GM12878 (cell line): ENCODE measurements at regions of chr10 and their contacts with region 1.

Region 1: DNA sequence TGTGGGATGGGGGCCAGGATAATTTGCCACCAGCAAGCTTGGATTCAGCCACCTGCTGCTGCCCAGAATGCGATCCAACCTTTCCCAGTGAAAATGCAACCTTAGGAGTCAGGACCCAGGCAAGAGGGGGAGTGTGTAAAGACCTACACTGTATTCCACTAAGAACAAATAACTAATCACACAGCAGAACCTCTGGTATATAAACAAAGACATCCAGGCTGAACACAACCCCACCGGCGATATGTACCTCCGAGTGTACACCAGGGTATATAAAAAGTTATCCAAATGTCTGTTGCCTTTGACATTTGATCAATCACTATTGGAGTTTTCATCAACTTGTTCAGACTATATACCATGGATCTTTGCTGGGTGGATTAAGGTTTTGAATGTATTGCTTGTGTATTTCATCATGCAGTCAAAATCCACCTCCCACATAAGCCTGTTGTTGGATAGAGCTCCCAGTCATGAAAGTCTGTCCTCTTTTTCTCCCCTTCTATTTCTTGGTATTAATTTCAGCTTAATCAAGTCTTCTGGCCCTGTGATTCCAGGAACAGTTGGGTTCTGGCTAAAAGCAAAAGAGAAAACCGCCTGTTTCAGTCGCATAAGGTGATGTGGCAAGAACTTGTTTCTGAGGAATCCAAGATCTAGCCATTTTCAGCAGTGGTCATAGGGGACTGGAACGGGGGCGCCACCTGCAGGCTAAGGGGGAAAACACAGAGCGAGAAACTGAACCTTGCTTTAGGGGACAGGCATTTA is 290.7 kb downstream of the CCDC3 start:
- DNase-seq: peak; percentile 26
- ATAC-seq: peak; percentile 98
- H3K4me3 ChIP-seq: no peak overlapping the region
- H3K27ac ChIP-seq: peak overlapping the region; percentile 43; the same call in 1 of the 2 replicates
- H3K4me1 ChIP-seq: peaks cover 2% of the 10 kb centered on the region; the same call in 1 of the 2 replicates
- H3K27me3 ChIP-seq: no peaks in the 10 kb centered on the region
- CTCF ChIP-seq: peak; percentile 93 to 97 (median 94)
- EP300 ChIP-seq: no peak
- POLR2A ChIP-seq: no peak
- RAD21 ChIP-seq: peak; percentile 97

Region 2: DNA sequence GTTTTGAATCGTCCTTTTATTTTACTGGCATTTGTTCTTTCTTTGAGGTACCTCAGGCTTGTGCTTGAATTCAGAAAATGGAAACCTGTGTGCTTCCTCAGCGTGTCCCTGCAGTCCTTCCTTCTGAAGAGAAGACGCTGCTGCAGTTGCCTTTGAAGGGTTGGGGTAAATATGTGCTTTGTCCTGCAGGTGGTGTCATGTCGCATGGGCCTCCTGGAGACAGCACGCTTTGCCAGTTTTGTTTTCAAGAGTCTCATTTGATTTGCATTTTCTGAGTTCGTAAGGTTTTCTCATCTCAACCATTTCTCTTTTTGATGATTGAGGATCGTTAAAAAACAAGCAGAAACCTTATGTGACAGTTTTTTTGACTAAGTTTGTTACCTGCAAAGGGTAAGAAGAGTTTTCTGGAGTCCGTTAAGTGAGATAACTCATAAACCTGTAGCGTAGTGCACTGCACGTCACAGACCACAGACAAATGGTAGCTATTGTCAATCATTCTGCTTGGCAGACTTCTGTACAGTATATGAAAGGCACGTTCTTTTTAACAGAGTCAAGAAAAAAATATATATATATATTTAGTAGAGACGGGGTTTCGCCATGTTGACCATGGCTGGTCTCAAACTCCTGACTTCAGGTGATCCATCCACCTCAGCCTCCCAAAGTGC is 457.8 kb before region 1 on chr10:
- CTCF ChIA-PET with region 1: interaction called, 3 read pairs
- POLR2A ChIA-PET with region 1: no interaction called
- RAD21 ChIA-PET with region 1: interaction called, 9 read pairs
- SMC1A ChIA-PET with region 1: no interaction called
- in situ Hi-C with region 1: loop called (anchors 5 kb)
- intact Hi-C with region 1: loop called (anchors 1 kb)
- DNase-seq: no peak
- ATAC-seq: peak; percentile 96
- H3K4me3 ChIP-seq: no peak overlapping the region
- H3K27ac ChIP-seq: no peak overlapping the region
- H3K4me1 ChIP-seq: no peaks in the 10 kb centered on the region
- H3K27me3 ChIP-seq: no peaks in the 10 kb centered on the region
- CTCF ChIP-seq: peak; percentile 64 to 70 (median 69)
- EP300 ChIP-seq: no peak
- POLR2A ChIP-seq: no peak
- RAD21 ChIP-seq: peak; percentile 86

Region 3: GRCh38 chr10:12348870-12349628 is 361.7 kb before region 1 on chr10 and contains the start of gene CAMK1D:
- CTCF ChIA-PET with region 1: interaction called, 3 read pairs
- POLR2A ChIA-PET with region 1: interaction called, 3 read pairs
- RAD21 ChIA-PET with region 1: interaction called, 4 read pairs
- SMC1A ChIA-PET with region 1: interaction called, 3 read pairs
- in situ Hi-C with region 1: no loop called
- intact Hi-C with region 1: loop called (anchors 10 kb)
- DNase-seq: no peak
- ATAC-seq: peak; percentile 57
- H3K4me3 ChIP-seq: peak within 1 kb of the TSS; percentile 92
- H3K27ac ChIP-seq: peak within 1 kb of the TSS; percentile 67
- H3K4me1 ChIP-seq: peaks cover 27% of the 10 kb centered on the region
- H3K27me3 ChIP-seq: no peaks in the 10 kb centered on the region
- CTCF ChIP-seq: peak; percentile 9 to 19 (median 15); a peak in 1 of 6 replicates
- EP300 ChIP-seq: no peak
- POLR2A ChIP-seq: peak; percentile 85
- RAD21 ChIP-seq: peak; percentile 11; the same call in 1 of the 2 replicates
- polyA plus RNA-seq, gene CAMK1D: 2.1 to 5.5 TPM

Region 4: GRCh38 chr10:12484941-12485805 is 225.6 kb before region 1 on chr10:
- CTCF ChIA-PET with region 1: interaction called, 13 read pairs
- POLR2A ChIA-PET with region 1: no interaction called
- RAD21 ChIA-PET with region 1: interaction called, 4 read pairs
- SMC1A ChIA-PET with region 1: no interaction called
- in situ Hi-C with region 1: no loop called
- intact Hi-C with region 1: no loop called
- DNase-seq: peak; percentile 76
- ATAC-seq: peak; percentile 85
- H3K4me3 ChIP-seq: no peak overlapping the region
- H3K27ac ChIP-seq: peak overlapping the region; percentile 76
- H3K4me1 ChIP-seq: peaks cover 20% of the 10 kb centered on the region
- H3K27me3 ChIP-seq: no peaks in the 10 kb centered on the region
- CTCF ChIP-seq: peak in 2 of 3 experiments; percentile 37 to 56; a peak in 3 of 6 replicates
- EP300 ChIP-seq: no peak
- POLR2A ChIP-seq: peak; percentile 37
- RAD21 ChIP-seq: peak; percentile 31; the same call in 1 of the 2 replicates

Region 5: DNA sequence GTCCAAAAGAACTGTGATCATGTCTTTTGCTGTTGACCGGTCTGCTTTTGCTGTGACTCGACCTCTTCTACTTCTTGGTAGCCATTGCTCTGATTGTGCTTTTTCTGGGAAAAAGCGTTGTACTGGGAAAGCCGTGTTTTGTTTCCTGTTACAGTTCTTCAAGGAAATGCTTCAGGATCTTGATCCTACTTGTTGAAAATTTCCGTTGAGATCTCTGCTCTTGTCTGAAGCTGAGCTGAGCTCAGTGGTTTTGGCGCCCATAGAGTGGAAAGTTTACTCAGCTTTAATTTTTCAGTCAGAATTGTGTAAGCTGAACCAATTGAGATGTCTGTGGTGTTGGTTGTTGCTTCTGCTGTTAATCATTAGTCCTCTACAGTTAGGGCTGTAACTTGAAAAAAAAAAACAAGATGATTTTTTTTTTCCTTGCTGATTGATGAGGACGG is 11.5 kb before region 1 on chr10:
- CTCF ChIA-PET with region 1: interaction called, 21 read pairs
- POLR2A ChIA-PET with region 1: no interaction called
- RAD21 ChIA-PET with region 1: interaction called, 3 read pairs
- SMC1A ChIA-PET with region 1: interaction called, 7 read pairs
- in situ Hi-C with region 1: no loop called
- intact Hi-C with region 1: no loop called
- DNase-seq: no peak
- ATAC-seq: no peak
- H3K4me3 ChIP-seq: no peak overlapping the region
- H3K27ac ChIP-seq: no peak overlapping the region
- H3K4me1 ChIP-seq: no peaks in the 10 kb centered on the region
- H3K27me3 ChIP-seq: no peaks in the 10 kb centered on the region
- CTCF ChIP-seq: no peak
- EP300 ChIP-seq: no peak
- POLR2A ChIP-seq: no peak
- RAD21 ChIP-seq: no peak

Region 6: GRCh38 chr10:12902135-12902572 is 191.4 kb after region 1 on chr10:
- CTCF ChIA-PET with region 1: interaction called, 8 read pairs
- POLR2A ChIA-PET with region 1: interaction called, 6 read pairs
- RAD21 ChIA-PET with region 1: no interaction called
- SMC1A ChIA-PET with region 1: no interaction called
- in situ Hi-C with region 1: no loop called
- intact Hi-C with region 1: loop called (anchors 5 kb)
- DNase-seq: peak; percentile 4
- ATAC-seq: peak; percentile 76
- H3K4me3 ChIP-seq: no peak overlapping the region
- H3K27ac ChIP-seq: no peak overlapping the region
- H3K4me1 ChIP-seq: no peaks in the 10 kb centered on the region
- H3K27me3 ChIP-seq: 0 out of 4 replicates have a peak, but pooled peaks cover 0 to 1% of the 10 kb centered on the region in 2 experiments
- CTCF ChIP-seq: peak; percentile 68 to 76 (median 72)
- EP300 ChIP-seq: no peak
- POLR2A ChIP-seq: no peak
- RAD21 ChIP-seq: peak; percentile 83

Region 7: GRCh38 chr10:13074561-13075451 is 364.0 kb after region 1 on chr10:
- CTCF ChIA-PET with region 1: interaction called, 3 read pairs
- POLR2A ChIA-PET with region 1: no interaction called
- RAD21 ChIA-PET with region 1: no interaction called
- SMC1A ChIA-PET with region 1: interaction called, 3 read pairs
- in situ Hi-C with region 1: no loop called
- intact Hi-C with region 1: loop called (anchors 5 kb)
- DNase-seq: no peak
- ATAC-seq: peak; percentile 97
- H3K4me3 ChIP-seq: no peak overlapping the region
- H3K27ac ChIP-seq: no peak overlapping the region
- H3K4me1 ChIP-seq: no peaks in the 10 kb centered on the region
- H3K27me3 ChIP-seq: peaks cover 0 to 3% of the 10 kb centered on the region in 2 experiments; a peak in 2 of 4 replicates
- CTCF ChIP-seq: peak; percentile 69 to 81 (median 74)
- EP300 ChIP-seq: no peak
- POLR2A ChIP-seq: no peak
- RAD21 ChIP-seq: peak; percentile 89